ENCODE measurements at regions of chr7 and their contacts with region 1.

Region 1: GRCh38 chr7:13778967-13779366 is 210.5 kb downstream of the ETV1 start:
- DNase-seq: no peak
- ATAC-seq: no peak
- H3K4me3 ChIP-seq: no peak overlapping the region
- H3K4me3 Mint-ChIP-seq: no peak overlapping the region
- H3K27ac ChIP-seq: no peak overlapping the region
- H3K27ac Mint-ChIP-seq: no peak overlapping the region
- H3K4me1 ChIP-seq: no peaks in the 10 kb centered on the region
- H3K4me1 Mint-ChIP-seq: no peaks in the 10 kb centered on the region
- H3K27me3 ChIP-seq: no peaks in the 10 kb centered on the region
- H3K27me3 Mint-ChIP-seq: no peaks in the 10 kb centered on the region
- CTCF ChIP-seq: no peak

Region 2: GRCh38 chr7:13821152-13821787 is 42.3 kb after region 1 on chr7:
- CTCF ChIA-PET with region 1: no interaction called
- POLR2A ChIA-PET with region 1: no interaction called
- intact Hi-C with region 1: no loop called
- DNase-seq: no peak
- ATAC-seq: no peak
- H3K4me3 ChIP-seq: no peak overlapping the region
- H3K4me3 Mint-ChIP-seq: no peak overlapping the region
- H3K27ac ChIP-seq: no peak overlapping the region
- H3K27ac Mint-ChIP-seq: no peak overlapping the region
- H3K4me1 ChIP-seq: no peaks in the 10 kb centered on the region
- H3K4me1 Mint-ChIP-seq: no peaks in the 10 kb centered on the region
- H3K27me3 ChIP-seq: no peaks in the 10 kb centered on the region
- H3K27me3 Mint-ChIP-seq: no peaks in the 10 kb centered on the region
- CTCF ChIP-seq: no peak

Region 3: GRCh38 chr7:14858866-14859265 is 1079.9 kb after region 1 on chr7:
- CTCF ChIA-PET with region 1: no interaction called
- POLR2A ChIA-PET with region 1: no interaction called
- intact Hi-C with region 1: loop called in 1 of 2 experiments (anchors 5 kb)
- DNase-seq: no peak
- ATAC-seq: no peak
- H3K4me3 ChIP-seq: no peak overlapping the region
- H3K4me3 Mint-ChIP-seq: no peak overlapping the region
- H3K27ac ChIP-seq: no peak overlapping the region
- H3K27ac Mint-ChIP-seq: no peak overlapping the region
- H3K4me1 ChIP-seq: no peaks in the 10 kb centered on the region
- H3K4me1 Mint-ChIP-seq: no peaks in the 10 kb centered on the region
- H3K27me3 ChIP-seq: no peaks in the 10 kb centered on the region
- H3K27me3 Mint-ChIP-seq: no peaks in the 10 kb centered on the region
- CTCF ChIP-seq: no peak

Measured in CD8-positive, alpha-beta T cell (primary cell).